CD8-positive, alpha-beta T cell (primary cell): ENCODE measurements at regions of chr19 and their contacts with region 1.

Region 1: GRCh38 chr19:3762501-3763459 is at the start of gene MRPL54:
- DNase-seq: peak; percentile 98 to 100 (median 99)
- ATAC-seq: peak; percentile 79
- H3K4me3 ChIP-seq: peak within 1 kb of the TSS; percentile 80 to 90
- H3K4me3 Mint-ChIP-seq: peak within 1 kb of the TSS; percentile 95
- H3K27ac ChIP-seq: peak within 1 kb of the TSS; percentile 98 to 99
- H3K27ac Mint-ChIP-seq: peak within 1 kb of the TSS; percentile 100
- H3K4me1 ChIP-seq: peaks cover 46% of the 10 kb centered on the region
- H3K4me1 Mint-ChIP-seq: peaks cover 47% of the 10 kb centered on the region
- H3K27me3 ChIP-seq: no peaks in the 10 kb centered on the region
- H3K27me3 Mint-ChIP-seq: no peaks in the 10 kb centered on the region
- CTCF ChIP-seq: no peak
- total RNA-seq, gene MRPL54: 72.5 to 78.0 TPM

Region 2: DNA sequence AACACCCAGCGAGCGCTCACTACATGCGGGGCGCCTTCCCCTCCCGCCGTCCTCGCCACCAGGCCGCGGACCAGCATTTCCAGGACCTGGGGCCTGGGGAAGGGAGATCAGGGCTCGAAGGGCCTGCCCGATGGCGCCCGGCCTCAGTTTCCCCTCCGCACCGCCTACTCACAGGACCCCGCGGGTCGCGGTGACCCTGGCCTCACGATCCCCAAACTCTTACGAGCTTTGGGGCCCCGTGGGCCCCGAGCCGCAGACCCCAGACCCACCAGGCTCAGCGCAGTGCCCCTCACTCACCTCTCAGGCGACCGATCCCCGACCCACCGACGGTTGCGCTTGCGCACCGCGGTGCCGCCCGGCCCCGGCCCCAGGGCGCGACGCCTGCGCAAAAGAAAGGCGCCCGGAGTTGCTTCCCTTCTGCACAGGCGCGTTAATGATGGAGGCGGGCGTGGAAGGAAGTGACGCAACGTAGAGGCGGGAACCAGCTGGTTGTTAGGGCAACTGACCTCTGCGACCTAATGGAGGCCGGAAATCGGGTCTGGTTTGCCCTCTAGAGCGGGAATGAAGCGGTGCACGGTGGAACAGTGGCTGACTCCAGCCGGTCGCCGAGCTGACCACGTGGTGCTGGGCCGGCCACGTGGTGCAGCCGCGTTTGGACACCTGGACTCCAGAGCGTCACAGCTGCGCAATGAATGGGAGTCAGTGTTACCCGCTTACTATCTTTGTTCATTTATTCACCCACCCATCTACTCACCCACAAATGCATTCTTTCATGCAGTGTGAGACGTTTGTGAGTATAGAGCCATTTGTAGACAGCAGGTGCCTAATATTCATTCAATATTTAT is 979.6 kb before region 1 on chr19 and contains the start of gene SGTA:
- CTCF ChIA-PET with region 1: no interaction called
- POLR2A ChIA-PET with region 1: no interaction called
- intact Hi-C with region 1: loop called (anchors 10 kb)
- DNase-seq: peak; percentile 91 to 99 (median 96)
- ATAC-seq: peak; percentile 62
- H3K4me3 ChIP-seq: peak within 1 kb of the TSS; percentile 94 to 98
- H3K4me3 Mint-ChIP-seq: peak within 1 kb of the TSS; percentile 86
- H3K27ac ChIP-seq: peak within 1 kb of the TSS; percentile 89 to 94
- H3K27ac Mint-ChIP-seq: peak within 1 kb of the TSS; percentile 92
- H3K4me1 ChIP-seq: peaks cover 41% of the 10 kb centered on the region
- H3K4me1 Mint-ChIP-seq: peaks cover 52% of the 10 kb centered on the region
- H3K27me3 ChIP-seq: no peaks in the 10 kb centered on the region
- H3K27me3 Mint-ChIP-seq: no peaks in the 10 kb centered on the region
- CTCF ChIP-seq: no peak
- total RNA-seq, gene SGTA: 38.2 to 38.9 TPM

Region 3: DNA sequence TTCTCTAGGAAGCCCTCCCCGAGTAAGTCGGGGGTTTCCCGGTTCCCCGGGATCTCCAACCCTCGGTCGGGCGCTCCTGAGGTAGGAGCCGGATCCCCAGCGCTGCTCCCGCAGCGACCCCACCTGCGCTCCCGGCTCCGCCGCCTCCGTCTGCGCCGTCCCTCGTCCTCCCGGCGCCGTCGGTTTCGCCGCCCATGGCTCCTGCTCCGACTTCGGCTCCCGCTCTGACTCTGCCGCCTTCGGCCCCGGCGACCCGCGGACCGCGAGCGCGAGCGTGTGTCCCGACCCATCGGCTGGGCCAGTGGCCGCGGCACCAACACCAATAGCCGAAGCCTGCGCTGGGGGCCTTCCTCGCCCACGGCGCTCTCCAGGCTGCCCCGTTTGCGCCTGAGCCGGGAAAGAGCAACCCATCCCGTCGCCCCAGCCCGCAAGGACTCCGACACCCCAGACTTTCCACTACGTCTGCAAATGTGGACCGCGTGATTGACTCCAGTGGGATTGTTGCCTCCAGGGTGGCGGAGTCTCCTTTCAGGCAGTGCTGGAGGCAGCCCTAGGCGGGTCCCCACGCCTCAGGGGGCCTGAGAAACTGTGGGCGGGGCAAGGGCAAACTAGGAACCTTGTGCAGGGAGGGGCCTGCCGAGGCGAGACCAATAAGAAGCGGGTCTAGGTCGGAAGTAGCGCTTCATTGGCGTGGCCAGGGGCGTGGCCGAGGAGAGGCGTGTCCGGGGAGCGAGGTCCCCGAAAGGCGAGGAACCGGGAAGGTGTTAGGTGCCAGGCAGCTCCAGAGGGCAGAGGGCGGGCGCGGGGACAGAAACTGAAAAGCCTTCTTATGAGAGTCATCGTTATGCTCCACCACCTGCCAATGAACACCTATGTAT is 136.1 kb before region 1 on chr19 and contains the start of gene CACTIN:
- CTCF ChIA-PET with region 1: no interaction called
- POLR2A ChIA-PET with region 1: no interaction called
- intact Hi-C with region 1: loop called (anchors 1 kb)
- DNase-seq: peak; percentile 97 to 99 (median 99)
- ATAC-seq: peak; percentile 99
- H3K4me3 ChIP-seq: peak within 1 kb of the TSS; percentile 77 to 80
- H3K4me3 Mint-ChIP-seq: peak within 1 kb of the TSS; percentile 85
- H3K27ac ChIP-seq: peak within 1 kb of the TSS; percentile 74 to 99
- H3K27ac Mint-ChIP-seq: peak within 1 kb of the TSS; percentile 99
- H3K4me1 ChIP-seq: peaks cover 20% of the 10 kb centered on the region
- H3K4me1 Mint-ChIP-seq: peaks cover 26% of the 10 kb centered on the region
- H3K27me3 ChIP-seq: no peaks in the 10 kb centered on the region
- H3K27me3 Mint-ChIP-seq: no peaks in the 10 kb centered on the region
- CTCF ChIP-seq: no peak
- total RNA-seq, gene CACTIN: 32.5 to 33.0 TPM

Region 4: DNA sequence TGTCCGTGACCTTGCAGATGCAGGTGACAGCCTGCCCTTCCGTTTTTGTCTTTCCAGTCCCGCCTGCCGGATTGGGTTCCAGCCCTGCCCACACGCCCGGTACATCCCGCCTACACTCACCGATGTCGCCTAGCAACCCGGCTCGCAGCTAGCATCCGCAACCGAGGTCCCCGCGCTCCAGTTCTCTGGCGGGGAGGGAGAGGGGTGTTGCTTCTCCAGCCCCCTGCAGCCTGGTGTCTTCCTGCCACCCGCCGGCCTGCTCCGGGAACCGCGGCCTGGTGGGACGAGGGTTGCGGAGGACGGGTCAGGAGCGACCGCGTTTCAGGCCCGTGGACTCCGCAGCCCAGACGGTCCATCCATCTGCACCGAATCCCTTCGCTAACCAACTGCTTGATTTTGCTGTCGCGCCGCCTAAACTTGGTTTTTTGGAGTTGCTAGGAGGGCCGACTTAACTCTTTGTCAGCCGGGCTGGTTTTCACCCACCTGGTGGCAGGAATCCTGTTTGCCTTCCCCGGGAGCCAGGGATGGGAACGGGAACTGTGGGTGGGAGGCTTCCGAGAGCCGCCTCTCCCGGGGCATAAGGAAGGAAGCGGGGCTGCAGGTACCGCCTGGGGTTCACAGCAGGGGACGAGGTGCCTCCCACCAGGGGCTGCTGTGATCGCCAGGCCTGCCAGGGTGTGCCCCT is 38.8 kb after region 1 on chr19:
- CTCF ChIA-PET with region 1: interaction called, 4 read pairs
- POLR2A ChIA-PET with region 1: interaction called, 3 read pairs
- intact Hi-C with region 1: loop called in 1 of 2 experiments (anchors 2 kb)
- DNase-seq: peak; percentile 38 to 84 (median 66)
- ATAC-seq: peak; percentile 69
- H3K4me3 ChIP-seq: peak overlapping the region; percentile 39 to 60
- H3K4me3 Mint-ChIP-seq: peak overlapping the region; percentile 56
- H3K27ac ChIP-seq: no peak overlapping the region
- H3K27ac Mint-ChIP-seq: peak overlapping the region; percentile 22
- H3K4me1 ChIP-seq: peaks cover 49% of the 10 kb centered on the region
- H3K4me1 Mint-ChIP-seq: peaks cover 43% of the 10 kb centered on the region
- H3K27me3 ChIP-seq: no peaks in the 10 kb centered on the region
- H3K27me3 Mint-ChIP-seq: no peaks in the 10 kb centered on the region
- CTCF ChIP-seq: no peak

Region 5: GRCh38 chr19:3836887-3837286 is 74.1 kb after region 1 on chr19:
- CTCF ChIA-PET with region 1: no interaction called
- POLR2A ChIA-PET with region 1: no interaction called
- intact Hi-C with region 1: no loop called
- DNase-seq: peak in 3 of 9 experiments; percentile 34 to 49 (median 35)
- ATAC-seq: peak; percentile 78
- H3K4me3 ChIP-seq: no peak overlapping the region
- H3K4me3 Mint-ChIP-seq: no peak overlapping the region
- H3K27ac ChIP-seq: no peak overlapping the region
- H3K27ac Mint-ChIP-seq: no peak overlapping the region
- H3K4me1 ChIP-seq: peaks cover 4% of the 10 kb centered on the region
- H3K4me1 Mint-ChIP-seq: peaks cover 6% of the 10 kb centered on the region
- H3K27me3 ChIP-seq: no peaks in the 10 kb centered on the region
- H3K27me3 Mint-ChIP-seq: no peaks in the 10 kb centered on the region
- CTCF ChIP-seq: no peak

Region 6: DNA sequence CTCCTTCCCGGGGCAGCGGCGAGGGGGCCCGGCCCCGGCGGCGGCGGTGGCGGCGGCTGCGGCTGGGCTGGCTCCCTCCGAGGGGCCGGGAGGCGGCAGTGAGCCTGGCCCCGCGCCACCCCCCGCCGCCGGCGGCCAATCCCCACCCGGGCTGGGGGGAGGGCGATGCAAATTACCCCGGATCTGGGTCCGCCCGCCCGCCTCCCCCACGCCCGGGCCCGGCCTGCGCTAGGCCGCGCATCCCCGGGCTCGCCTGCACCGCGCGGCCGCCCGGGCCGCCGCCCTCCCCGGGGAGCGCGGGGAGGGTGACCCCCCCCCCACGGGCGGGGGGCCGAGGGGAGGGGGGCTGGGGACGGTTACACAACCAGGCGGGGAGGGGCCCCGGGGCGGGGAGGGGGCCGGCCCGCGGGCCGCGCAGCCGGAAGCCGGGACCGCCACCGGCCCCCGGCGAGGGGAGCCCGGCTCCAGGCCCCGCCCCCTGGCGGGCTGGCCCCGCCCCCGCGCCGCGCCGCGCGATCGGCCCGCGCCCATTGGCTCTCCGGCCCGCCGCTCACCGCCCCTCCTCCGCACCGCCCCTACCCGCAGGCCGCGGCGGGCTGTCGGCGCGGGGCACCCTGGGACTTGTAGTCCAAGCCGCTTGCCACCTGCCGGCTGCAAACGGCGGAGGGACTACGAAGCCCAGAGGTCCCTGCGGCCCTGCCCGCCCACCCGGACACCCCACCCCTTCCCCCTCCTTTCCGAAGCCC is 302.8 kb after region 1 on chr19:
- CTCF ChIA-PET with region 1: no interaction called
- POLR2A ChIA-PET with region 1: no interaction called
- intact Hi-C with region 1: loop called in 1 of 2 experiments (anchors 2 kb)
- DNase-seq: peak; percentile 94 to 99 (median 97)
- ATAC-seq: peak; percentile 72
- H3K4me3 ChIP-seq: peak overlapping the region; percentile 86 to 89
- H3K4me3 Mint-ChIP-seq: peak overlapping the region; percentile 73
- H3K27ac ChIP-seq: no peak overlapping the region
- H3K27ac Mint-ChIP-seq: no peak overlapping the region
- H3K4me1 ChIP-seq: peaks cover 58% of the 10 kb centered on the region
- H3K4me1 Mint-ChIP-seq: peaks cover 40% of the 10 kb centered on the region
- H3K27me3 ChIP-seq: no peaks in the 10 kb centered on the region
- H3K27me3 Mint-ChIP-seq: no peaks in the 10 kb centered on the region
- CTCF ChIP-seq: no peak

Region 7: GRCh38 chr19:4457654-4458395 is 695.0 kb after region 1 on chr19 and contains the start of gene UBXN6:
- CTCF ChIA-PET with region 1: no interaction called
- POLR2A ChIA-PET with region 1: no interaction called
- intact Hi-C with region 1: loop called in 1 of 2 experiments (anchors 5 kb)
- DNase-seq: peak; percentile 95 to 99 (median 97)
- ATAC-seq: peak; percentile 96
- H3K4me3 ChIP-seq: peak within 1 kb of the TSS; percentile 47 to 70
- H3K4me3 Mint-ChIP-seq: peak within 1 kb of the TSS; percentile 89
- H3K27ac ChIP-seq: peak within 1 kb of the TSS; percentile 63 to 73
- H3K27ac Mint-ChIP-seq: peak within 1 kb of the TSS; percentile 92
- H3K4me1 ChIP-seq: peaks cover 12% of the 10 kb centered on the region
- H3K4me1 Mint-ChIP-seq: peaks cover 18% of the 10 kb centered on the region
- H3K27me3 ChIP-seq: no peaks in the 10 kb centered on the region
- H3K27me3 Mint-ChIP-seq: no peaks in the 10 kb centered on the region
- CTCF ChIP-seq: no peak
- total RNA-seq, gene UBXN6: 61.5 to 62.6 TPM